Prostate gland (tissue), 2 donors: ENCODE measurements at regions of chr14 and their contacts with region 1.

Region 1: GRCh38 chr14:64294672-64295413 is 672 bp upstream of the ESR2 start:
- DNase-seq: peak; percentile 37
- H3K4me3 ChIP-seq: peak overlapping the region; percentile 18 to 28
- H3K27ac ChIP-seq: no peak overlapping the region
- H3K4me1 ChIP-seq: no peaks in the 10 kb centered on the region
- H3K27me3 ChIP-seq: no peaks in the 10 kb centered on the region
- CTCF ChIP-seq: peak; percentile 37 to 75 (median 67)
- POLR2A ChIP-seq: no peak

Region 2: GRCh38 chr14:63800651-63801375 is 494.0 kb before region 1 on chr14:
- intact Hi-C with region 1: loop called (anchors 2 kb)
- DNase-seq: no peak
- H3K4me3 ChIP-seq: no peak overlapping the region
- H3K27ac ChIP-seq: no peak overlapping the region
- H3K4me1 ChIP-seq: no peaks in the 10 kb centered on the region
- H3K27me3 ChIP-seq: no peaks in the 10 kb centered on the region
- CTCF ChIP-seq: no peak
- POLR2A ChIP-seq: no peak

Region 3: GRCh38 chr14:63993992-63994391 is 300.9 kb before region 1 on chr14:
- intact Hi-C with region 1: no loop called
- DNase-seq: no peak
- H3K4me3 ChIP-seq: no peak overlapping the region
- H3K27ac ChIP-seq: no peak overlapping the region
- H3K4me1 ChIP-seq: no peaks in the 10 kb centered on the region
- H3K27me3 ChIP-seq: no peaks in the 10 kb centered on the region
- CTCF ChIP-seq: peak in 2 of 4 experiments; percentile 23 to 31
- POLR2A ChIP-seq: no peak

Region 4: GRCh38 chr14:64012720-64013119 is 282.1 kb before region 1 on chr14:
- intact Hi-C with region 1: loop called (anchors 5 kb)
- DNase-seq: no peak
- H3K4me3 ChIP-seq: no peak overlapping the region
- H3K27ac ChIP-seq: no peak overlapping the region
- H3K4me1 ChIP-seq: no peaks in the 10 kb centered on the region
- H3K27me3 ChIP-seq: no peaks in the 10 kb centered on the region
- CTCF ChIP-seq: no peak
- POLR2A ChIP-seq: no peak

Region 5: GRCh38 chr14:64040044-64040443 is 254.8 kb before region 1 on chr14:
- intact Hi-C with region 1: loop called (anchors 1 kb)
- DNase-seq: no peak
- H3K4me3 ChIP-seq: no peak overlapping the region
- H3K27ac ChIP-seq: no peak overlapping the region
- H3K4me1 ChIP-seq: no peaks in the 10 kb centered on the region
- H3K27me3 ChIP-seq: no peaks in the 10 kb centered on the region
- CTCF ChIP-seq: peak in 3 of 4 experiments; percentile 19 to 45 (median 23)
- POLR2A ChIP-seq: no peak

Region 6: GRCh38 chr14:64279704-64280668 is 14.9 kb before region 1 on chr14:
- intact Hi-C with region 1: no loop called
- DNase-seq: no peak
- H3K4me3 ChIP-seq: no peak overlapping the region
- H3K27ac ChIP-seq: no peak overlapping the region
- H3K4me1 ChIP-seq: no peaks in the 10 kb centered on the region
- H3K27me3 ChIP-seq: no peaks in the 10 kb centered on the region
- CTCF ChIP-seq: no peak
- POLR2A ChIP-seq: no peak